Ascending aorta (tissue), 2 donors: ENCODE measurements at regions of chr12 and their contacts with region 1.

Region 1: DNA sequence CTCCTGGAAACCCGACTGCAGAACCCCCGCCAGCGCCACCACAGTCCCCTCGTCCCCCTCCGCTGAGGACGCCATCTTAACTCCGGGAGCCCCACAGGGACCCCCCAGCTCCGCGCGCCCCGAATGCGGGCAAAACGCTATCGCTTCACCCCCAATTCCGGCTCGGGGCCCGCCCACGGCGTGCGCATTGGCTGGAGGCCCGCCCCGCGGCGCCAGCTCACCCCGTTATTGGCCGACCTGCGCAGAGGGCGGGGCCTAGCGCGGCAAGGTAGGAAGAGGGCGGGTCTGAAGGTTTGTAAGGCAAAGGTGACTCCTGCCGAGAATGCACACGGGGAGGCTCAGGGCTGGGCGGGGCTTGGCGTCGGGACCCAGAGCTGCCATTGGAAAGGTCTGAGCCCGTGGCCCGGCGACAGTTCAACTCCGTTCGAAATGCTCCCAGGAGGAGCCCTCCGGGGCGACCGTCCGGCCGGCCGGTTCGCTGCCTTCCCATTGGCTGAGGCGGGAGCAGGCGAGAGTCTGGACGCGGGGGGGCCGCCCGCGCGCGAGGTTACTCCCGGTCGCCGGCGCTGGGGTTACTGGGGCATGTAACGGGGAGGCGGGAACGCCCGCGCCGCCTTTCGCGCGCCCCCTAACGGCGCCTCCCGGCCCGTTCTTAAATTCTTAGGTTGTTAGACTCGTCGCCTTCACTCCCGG is at the start of gene LPCAT3:
- DNase-seq: peak; percentile 92 to 99
- H3K4me3 ChIP-seq: peak within 1 kb of the TSS; percentile 66 to 73
- H3K27ac ChIP-seq: peak within 1 kb of the TSS; percentile 87 to 92
- H3K4me1 ChIP-seq: peaks cover 5% of the 10 kb centered on the region in 2 donors
- H3K27me3 ChIP-seq: no peaks in the 10 kb centered on the region
- CTCF ChIP-seq: peak; percentile 83 to 92 (median 90)
- total RNA-seq, gene LPCAT3: 23.0 TPM

Region 2: DNA sequence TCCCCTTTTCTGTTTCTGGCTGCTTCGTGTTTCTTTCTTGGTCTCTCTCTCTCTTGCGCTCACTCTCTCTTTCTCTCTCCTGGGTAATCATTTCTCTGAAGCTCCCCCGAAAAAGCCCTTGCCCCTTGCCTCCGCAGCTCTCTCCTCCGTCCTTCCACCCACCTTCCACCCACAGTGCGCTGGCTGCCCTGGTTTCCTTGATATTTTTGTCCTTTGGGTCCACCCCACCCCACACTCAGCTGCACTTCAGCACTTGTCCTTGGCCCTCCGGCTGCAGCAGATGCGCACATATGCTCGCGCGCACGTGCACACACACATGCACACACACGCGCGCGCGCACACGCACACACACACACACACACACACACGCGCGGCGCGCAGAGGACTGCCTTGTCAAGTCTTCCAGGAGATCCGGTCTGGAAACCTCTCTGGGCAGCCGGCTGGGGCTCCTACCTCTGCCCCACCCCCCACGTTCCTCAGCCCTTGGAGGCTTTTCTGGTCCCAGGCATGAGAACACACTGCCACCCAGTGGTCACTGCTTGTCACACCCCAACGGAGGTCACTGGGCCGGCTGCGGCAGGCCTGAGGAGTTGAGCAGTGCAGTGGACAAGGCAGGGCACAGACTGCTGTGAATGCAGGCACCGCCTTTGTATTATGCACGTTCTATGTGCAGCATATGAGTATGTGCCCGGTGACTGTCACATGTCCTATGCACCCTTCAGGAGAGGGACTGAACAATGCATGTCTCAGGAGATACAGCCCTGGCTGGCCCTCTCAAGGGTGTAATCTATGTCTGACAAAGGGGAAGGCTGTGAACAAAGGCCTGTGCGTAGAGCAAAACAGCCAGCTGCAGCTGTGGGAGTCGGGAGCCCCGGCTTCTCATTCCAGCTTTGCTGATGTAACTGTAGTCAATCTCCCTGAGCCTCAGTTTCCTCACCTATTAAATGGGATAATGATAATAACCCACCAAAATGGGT is 239.6 kb before region 1 on chr12:
- intact Hi-C with region 1: no loop called
- DNase-seq: peak; percentile 82 to 97
- H3K4me3 ChIP-seq: peak overlapping the region; percentile 45 to 72
- H3K27ac ChIP-seq: peak overlapping the region; percentile 35 to 77
- H3K4me1 ChIP-seq: peaks cover 7% of the 10 kb centered on the region in 2 donors
- H3K27me3 ChIP-seq: no peaks in the 10 kb centered on the region
- CTCF ChIP-seq: peak; percentile 93 to 97 (median 95)

Region 3: GRCh38 chr12:6944381-6945186 is 73.9 kb before region 1 on chr12:
- intact Hi-C with region 1: loop called (anchors 2 kb)
- DNase-seq: peak; percentile 86 to 97
- H3K4me3 ChIP-seq: peak overlapping the region; percentile 80 to 91
- H3K27ac ChIP-seq: peak overlapping the region; percentile 96 to 99
- H3K4me1 ChIP-seq: peaks cover 0 to 21% of the 10 kb centered on the region in 2 donors
- H3K27me3 ChIP-seq: no peaks in the 10 kb centered on the region
- CTCF ChIP-seq: peak; percentile 77 to 95 (median 81)

Region 4: GRCh38 chr12:7060353-7060954 is 42.0 kb after region 1 on chr12 and contains the start of gene C1S:
- intact Hi-C with region 1: loop called (anchors 1 kb)
- DNase-seq: peak; percentile 57 to 93
- H3K4me3 ChIP-seq: peak within 1 kb of the TSS; percentile 34 to 55
- H3K27ac ChIP-seq: peak within 1 kb of the TSS; percentile 80 to 82
- H3K4me1 ChIP-seq: peaks cover 0 to 17% of the 10 kb centered on the region in 2 donors
- H3K27me3 ChIP-seq: no peaks in the 10 kb centered on the region
- CTCF ChIP-seq: peak; percentile 81 to 92 (median 88)
- total RNA-seq, gene C1S: 273 TPM

Region 5: GRCh38 chr12:7108796-7109571 is 90.5 kb after region 1 on chr12 and contains the start of gene C1RL:
- intact Hi-C with region 1: loop called (anchors 2 kb)
- DNase-seq: peak; percentile 73 to 97
- H3K4me3 ChIP-seq: peak within 1 kb of the TSS; percentile 59 to 81
- H3K27ac ChIP-seq: peak within 1 kb of the TSS; percentile 91 to 93
- H3K4me1 ChIP-seq: peaks cover 3 to 13% of the 10 kb centered on the region in 2 donors
- H3K27me3 ChIP-seq: no peaks in the 10 kb centered on the region
- CTCF ChIP-seq: peak; percentile 95 to 100 (median 96)
- total RNA-seq, gene C1RL: 196 TPM